Tibial artery (tissue), 4 donors: ENCODE measurements at regions of chr10 and their contacts with region 1.

Region 1: DNA sequence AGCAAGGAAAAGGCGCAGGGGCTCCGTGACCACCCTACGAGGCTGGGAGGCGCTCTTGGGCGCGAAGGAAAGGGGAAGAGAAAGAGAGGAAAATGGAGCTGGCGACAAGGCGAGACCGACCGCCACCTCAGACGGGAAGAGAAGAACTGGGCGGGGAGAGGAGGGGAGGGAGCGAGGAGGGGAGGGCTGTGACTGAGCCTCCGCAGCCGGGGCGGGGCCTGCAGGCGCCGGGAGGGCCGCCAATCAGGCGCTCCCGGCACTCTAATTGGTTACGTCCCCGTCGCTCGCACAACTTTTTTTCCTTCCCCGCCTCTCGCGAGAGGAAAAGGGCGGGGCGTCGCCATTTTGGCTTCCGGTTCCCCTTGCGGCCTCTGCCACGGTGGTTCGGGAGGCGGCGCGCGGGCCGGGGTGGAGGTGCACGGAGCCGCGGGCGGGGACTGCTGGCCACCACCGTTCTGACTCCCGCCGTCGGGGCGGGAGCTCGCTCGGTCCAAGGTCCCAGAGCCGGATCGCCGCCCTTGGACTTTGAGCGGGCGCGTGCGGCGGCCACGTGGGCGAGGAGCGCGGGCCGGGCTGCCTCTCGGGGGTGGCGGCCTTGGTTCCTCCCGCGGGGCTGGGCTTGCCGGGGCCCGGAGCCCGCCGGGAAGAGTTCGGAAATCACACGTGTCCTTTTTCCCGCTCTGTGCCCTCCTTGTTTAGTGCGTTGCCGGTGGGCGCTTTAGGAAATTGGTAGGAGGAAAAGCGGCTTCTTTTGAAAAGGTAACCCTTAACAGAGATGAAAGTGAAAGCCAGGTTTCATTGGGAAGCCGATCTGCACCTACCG is at the start of gene GDI2:
- DNase-seq: peak; percentile 94 to 97
- H3K4me3 ChIP-seq: peak within 1 kb of the TSS; percentile 91 to 100
- H3K27ac ChIP-seq: peak within 1 kb of the TSS; percentile 96 to 99
- H3K4me1 ChIP-seq: peaks cover 0 to 46% (median 14%) of the 10 kb centered on the region in 4 donors
- H3K27me3 ChIP-seq: no peaks in the 10 kb centered on the region
- CTCF ChIP-seq: peak in 1 of 2 experiments; percentile 24

Region 2: GRCh38 chr10:5629303-5630111 is 184.0 kb before region 1 on chr10:
- intact Hi-C with region 1: loop called (anchors 10 kb)
- DNase-seq: peak; percentile 86 to 89
- H3K4me3 ChIP-seq: peak overlapping the region in 1 of 2 donors; percentile 40
- H3K27ac ChIP-seq: peak overlapping the region; percentile 88
- H3K4me1 ChIP-seq: peaks cover 0 to 85% (median 63%) of the 10 kb centered on the region in 4 donors
- H3K27me3 ChIP-seq: no peaks in the 10 kb centered on the region
- CTCF ChIP-seq: peak; percentile 73 to 82

Region 3: GRCh38 chr10:5844345-5845048 is 31.0 kb after region 1 on chr10:
- intact Hi-C with region 1: no loop called
- DNase-seq: no peak
- H3K4me3 ChIP-seq: no peak overlapping the region
- H3K27ac ChIP-seq: no peak overlapping the region
- H3K4me1 ChIP-seq: peaks cover 0 to 6% (median 0%) of the 10 kb centered on the region in 4 donors
- H3K27me3 ChIP-seq: peaks cover 0 to under 1% of the 10 kb centered on the region in 2 donors
- CTCF ChIP-seq: no peak

Region 4: DNA sequence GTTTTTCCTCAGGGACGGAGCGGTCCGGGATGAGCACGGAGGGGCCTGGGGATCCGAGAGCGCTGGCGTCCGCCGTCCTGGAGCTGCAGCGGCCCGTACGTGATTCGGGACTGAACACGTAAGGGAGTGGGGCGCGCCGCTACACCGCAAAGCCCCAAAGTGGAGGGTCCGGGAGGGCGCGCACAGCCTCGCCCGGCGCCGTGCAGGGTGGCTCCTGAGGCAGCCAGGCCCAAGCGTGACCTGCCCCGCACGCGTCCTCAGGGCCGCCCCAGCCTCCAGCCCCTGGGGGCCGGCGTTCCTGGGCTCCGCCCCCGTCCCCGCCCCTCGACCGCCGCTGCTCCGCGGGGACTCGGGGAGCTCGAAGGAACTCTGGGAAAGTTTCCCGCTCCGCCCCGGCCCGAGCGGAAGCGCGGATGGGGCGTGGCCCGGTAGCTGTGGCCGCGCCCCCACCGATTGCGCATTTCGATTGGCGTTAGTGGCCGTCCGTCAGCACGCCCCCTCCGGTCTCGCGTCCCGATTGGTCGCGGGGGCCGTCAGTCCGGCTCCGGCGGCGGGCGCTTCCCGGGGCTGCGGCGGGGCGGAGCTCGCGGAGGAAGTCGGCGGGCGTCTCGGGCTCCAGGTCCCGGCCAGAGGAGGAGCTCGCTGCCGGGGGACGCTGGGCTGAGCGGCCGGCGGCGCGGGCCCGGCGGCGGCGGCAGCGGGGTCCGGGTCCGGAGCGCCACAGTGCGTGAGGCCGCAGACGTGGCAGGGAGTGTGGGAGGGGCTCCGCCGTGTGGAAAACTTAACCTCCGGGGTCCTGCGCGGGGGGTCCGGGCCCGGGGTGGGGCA is 76.3 kb after region 1 on chr10 and contains the starts of genes ANKRD16 and FBH1:
- intact Hi-C with region 1: loop called (anchors 1 kb)
- DNase-seq: peak; percentile 96 to 99
- H3K4me3 ChIP-seq: peak within 1 kb of the TSS; percentile 79 to 98
- H3K27ac ChIP-seq: peak within 1 kb of the TSS; percentile 82 to 85
- H3K4me1 ChIP-seq: peaks cover 0 to 43% (median 30%) of the 10 kb centered on the region in 4 donors
- H3K27me3 ChIP-seq: no peaks in the 10 kb centered on the region
- CTCF ChIP-seq: no peak